Right ventricle myocardium superior (tissue), 1 donor: ENCODE measurements at regions of chr12 and their contacts with region 1.

Region 1: DNA sequence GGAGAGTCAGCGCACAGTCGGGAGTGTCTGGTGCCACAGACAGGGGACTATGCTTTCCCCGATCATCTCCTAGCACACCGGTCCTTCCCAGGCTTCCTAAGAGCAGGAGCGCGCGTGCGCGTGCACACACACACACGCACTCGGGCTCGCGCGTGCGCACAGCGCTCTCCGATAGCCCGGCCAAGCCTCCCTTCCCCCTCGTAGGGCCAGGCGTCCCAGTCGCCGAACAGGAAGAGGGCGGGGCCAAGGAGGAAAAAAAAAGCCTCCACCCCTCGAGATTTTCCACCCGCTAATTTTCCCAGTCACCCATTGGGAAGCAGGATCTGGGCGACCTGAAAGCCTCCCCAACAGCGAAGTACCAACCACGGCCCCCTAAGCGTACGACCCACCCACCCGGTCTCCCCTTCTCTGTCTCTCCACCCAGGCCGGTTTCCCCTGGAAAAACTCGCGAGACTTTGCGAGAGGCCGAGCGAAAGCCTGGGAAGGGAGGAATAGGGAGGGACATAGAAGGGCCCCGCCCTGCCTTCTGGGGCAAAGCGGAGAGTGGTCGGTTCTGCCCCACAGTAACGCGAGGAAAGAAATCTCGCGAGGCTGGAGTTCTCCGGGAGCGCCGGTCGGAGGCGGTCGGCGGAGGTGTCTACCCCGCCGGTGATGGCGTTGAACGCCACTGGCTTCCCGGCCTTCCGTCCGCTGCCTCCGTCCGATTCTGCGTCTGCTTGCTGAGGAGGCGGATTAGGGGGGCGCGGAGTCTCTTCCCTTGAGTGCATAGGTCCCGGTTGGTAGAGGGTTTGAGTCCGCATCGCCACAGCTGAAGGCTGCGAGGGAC is at the starts of genes FGFR1OP2 and INTS13:
- DNase-seq: peak; percentile 100
- ATAC-seq: peak; percentile 98
- total RNA-seq, gene FGFR1OP2: 30.0 TPM
- total RNA-seq, gene INTS13: 27.0 TPM

Region 2: DNA sequence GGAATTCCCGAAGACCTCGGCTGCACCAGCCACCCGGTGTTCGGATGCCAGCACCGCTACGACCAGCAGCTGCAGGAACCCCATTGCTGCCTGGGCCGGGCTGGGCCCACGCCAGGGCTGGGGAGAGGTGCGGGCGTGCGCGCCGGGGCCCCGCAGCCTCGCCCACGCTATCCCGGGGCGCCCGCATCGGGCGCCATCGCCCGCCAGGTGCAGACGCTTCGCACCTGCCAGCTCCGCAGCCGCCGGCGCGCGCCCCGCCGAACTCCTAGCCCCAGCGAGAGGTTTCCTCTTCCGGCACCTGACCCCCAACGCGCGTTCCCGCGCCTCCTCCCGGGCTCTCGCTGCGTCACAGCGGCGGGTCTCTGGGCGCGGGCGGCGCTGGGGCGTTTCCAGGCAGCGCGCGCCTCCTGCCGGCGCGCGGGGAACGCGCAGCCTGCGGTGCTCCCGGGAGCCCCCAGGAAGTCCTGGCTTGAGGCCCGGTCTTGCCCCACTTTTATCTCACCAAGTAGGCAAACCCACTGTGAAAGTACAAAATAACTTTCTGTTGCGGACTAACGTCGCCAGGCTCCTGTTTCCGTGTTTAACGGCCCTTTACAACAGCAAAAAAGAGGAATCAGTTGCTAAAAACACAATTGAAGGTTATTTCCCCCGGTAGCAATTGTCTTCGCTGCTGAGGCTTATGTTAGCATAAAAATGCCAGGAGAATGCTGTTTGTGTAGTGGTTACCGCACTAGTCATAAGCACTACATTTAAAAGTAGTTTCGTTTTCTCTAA is 76.2 kb after region 1 on chr12 and contains the start of gene TM7SF3:
- intact Hi-C with region 1: loop called (anchors 5 kb)
- DNase-seq: peak; percentile 96
- ATAC-seq: peak; percentile 98
- total RNA-seq, gene TM7SF3: 19.7 TPM

Region 3: GRCh38 chr12:27434673-27435565 is 496.8 kb after region 1 on chr12:
- intact Hi-C with region 1: no loop called
- DNase-seq: no peak
- ATAC-seq: peak; percentile 69